Motor neuron (in vitro differentiated cells): ENCODE measurements at regions of chr10 and their contacts with region 1.

Region 1: GRCh38 chr10:113521123-113521795 is 31.6 kb upstream of the HABP2 start:
- ATAC-seq: peak; percentile 44 to 87 (median 76)
- H3K4me3 ChIP-seq: no peak overlapping the region
- H3K27ac ChIP-seq: no peak overlapping the region
- H3K4me1 ChIP-seq: no peaks in the 10 kb centered on the region

Region 2: GRCh38 chr10:113187063-113187777 is 334.0 kb before region 1 on chr10:
- in situ Hi-C with region 1: loop called in 1 of 9 experiments (anchors 25 kb)
- ATAC-seq: peak; percentile 56 to 91 (median 74)
- H3K4me3 ChIP-seq: no peak overlapping the region
- H3K27ac ChIP-seq: peak overlapping the region in 1 of 2 donors; percentile 48
- H3K4me1 ChIP-seq: peaks cover 0 to 13% of the 10 kb centered on the region in 2 donors

Region 3: GRCh38 chr10:113213035-113213434 is 308.2 kb before region 1 on chr10:
- in situ Hi-C with region 1: no loop called
- ATAC-seq: peak in 2 of 8 experiments; percentile 65 to 85
- H3K4me3 ChIP-seq: no peak overlapping the region
- H3K27ac ChIP-seq: no peak overlapping the region
- H3K4me1 ChIP-seq: no peaks in the 10 kb centered on the region

Region 4: GRCh38 chr10:113720386-113720785 is 199.1 kb after region 1 on chr10:
- in situ Hi-C with region 1: no loop called
- ATAC-seq: peak in 2 of 8 experiments; percentile 57 to 92
- H3K4me3 ChIP-seq: no peak overlapping the region
- H3K27ac ChIP-seq: no peak overlapping the region
- H3K4me1 ChIP-seq: no peaks in the 10 kb centered on the region